ENCODE measurements at regions of chr6 and their contacts with region 1.

Region 1: GRCh38 chr6:160117137-160117536 is 4.5 kb upstream of the SLC22A1 start:
- DNase-seq: no peak

Region 2: GRCh38 chr6:158122048-158122447 is 1995.1 kb before region 1 on chr6:
- intact Hi-C with region 1: no loop called
- DNase-seq: no peak

Region 3: GRCh38 chr6:160051390-160051789 is 65.7 kb before region 1 on chr6:
- intact Hi-C with region 1: no loop called
- DNase-seq: no peak

Region 4: DNA sequence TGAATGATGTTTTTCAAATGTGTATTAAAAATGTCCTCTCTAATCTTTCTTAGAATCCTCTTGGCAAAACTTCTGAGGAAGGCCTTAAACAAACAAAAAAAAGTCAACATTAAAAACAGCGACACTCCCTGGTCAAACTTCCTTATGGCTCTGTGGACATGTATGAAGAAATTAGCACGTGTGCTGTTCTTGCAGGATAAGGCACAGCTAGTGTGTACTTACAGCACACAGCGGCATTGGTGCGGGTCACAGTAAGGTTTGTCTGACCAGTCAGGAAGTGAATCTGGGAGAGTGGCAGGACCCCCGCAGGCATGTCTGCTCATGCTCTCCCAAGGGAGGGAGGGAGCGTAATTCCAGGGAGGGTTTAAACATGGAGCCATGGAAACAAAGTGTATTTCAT is 43.3 kb after region 1 on chr6:
- intact Hi-C with region 1: loop called in 1 of 2 experiments (anchors 1 kb)
- DNase-seq: no peak

Region 5: DNA sequence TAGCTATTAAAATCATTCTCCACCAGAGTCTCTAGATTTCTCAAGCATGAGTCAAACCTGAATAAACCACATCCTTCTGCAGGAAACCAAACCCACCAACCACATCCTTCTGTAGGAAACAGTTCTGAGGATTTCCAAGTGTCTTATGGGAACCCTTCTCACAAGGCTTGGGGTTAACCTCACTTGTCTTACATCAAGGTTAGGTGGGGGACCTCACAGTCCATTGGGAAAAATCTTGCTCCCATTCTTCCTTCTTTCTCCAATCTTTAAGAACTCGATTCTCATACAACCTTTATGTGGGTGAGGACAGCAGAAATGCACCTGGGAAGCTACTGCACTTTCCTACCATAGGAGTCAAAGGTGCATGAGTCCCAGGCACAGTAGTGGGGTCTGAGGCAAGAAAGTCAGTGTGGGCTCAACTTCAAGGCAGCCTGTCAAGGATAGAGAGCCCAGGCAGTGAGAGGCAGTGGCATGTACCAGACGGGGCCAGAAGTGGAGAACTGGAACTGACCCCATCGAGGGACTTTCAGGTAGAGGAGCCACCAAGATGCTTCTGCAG is 345.5 kb after region 1 on chr6:
- intact Hi-C with region 1: no loop called
- DNase-seq: no peak

Measured in posterior vena cava (tissue), 2 donors.